Aorta (tissue), 5 donors: ENCODE measurements at regions of chr3 and their contacts with region 1.

Region 1: GRCh38 chr3:151875759-151876158 is 2.3 kb downstream of the SUCNR1 start:
- DNase-seq: no peak
- ATAC-seq: no peak
- H3K4me3 ChIP-seq: no peak overlapping the region
- H3K27ac ChIP-seq: no peak overlapping the region
- H3K4me1 ChIP-seq: peaks cover 2 to 5% of the 10 kb centered on the region in 2 donors
- H3K27me3 ChIP-seq: no peaks in the 10 kb centered on the region

Region 2: GRCh38 chr3:151918253-151919029 is 42.7 kb after region 1 on chr3:
- intact Hi-C with region 1: loop called in 1 of 2 experiments (anchors 5 kb)
- DNase-seq: no peak
- ATAC-seq: peak; percentile 77
- H3K4me3 ChIP-seq: no peak overlapping the region
- H3K27ac ChIP-seq: no peak overlapping the region
- H3K4me1 ChIP-seq: no peaks in the 10 kb centered on the region
- H3K27me3 ChIP-seq: no peaks in the 10 kb centered on the region